ENCODE measurements at regions of chr11 and their contacts with region 1.

Region 1: GRCh38 chr11:18321980-18322711 is at the starts of genes GTF2H1 and HPS5:
- DNase-seq: peak; percentile 97
- H3K4me3 Mint-ChIP-seq: peak within 1 kb of the TSS; percentile 97
- H3K27ac Mint-ChIP-seq: peak within 1 kb of the TSS; percentile 100
- H3K4me1 Mint-ChIP-seq: peaks cover 66% of the 10 kb centered on the region
- H3K27me3 Mint-ChIP-seq: no peaks in the 10 kb centered on the region
- total RNA-seq, gene GTF2H1: 37.3 to 39.5 TPM
- total RNA-seq, gene HPS5: 19.9 to 20.9 TPM

Region 2: GRCh38 chr11:18105802-18106574 is 216.2 kb before region 1 on chr11 and contains the start of gene SAAL1:
- CTCF ChIA-PET with region 1: no interaction called
- POLR2A ChIA-PET with region 1: no interaction called
- intact Hi-C with region 1: loop called (anchors 2 kb)
- DNase-seq: peak; percentile 94
- H3K4me3 Mint-ChIP-seq: peak within 1 kb of the TSS; percentile 92
- H3K27ac Mint-ChIP-seq: peak within 1 kb of the TSS; percentile 78
- H3K4me1 Mint-ChIP-seq: peaks cover 37% of the 10 kb centered on the region
- H3K27me3 Mint-ChIP-seq: peaks cover 4% of the 10 kb centered on the region
- total RNA-seq, gene SAAL1: 32.1 to 34.3 TPM

Region 3: GRCh38 chr11:18332302-18332701 is 10.2 kb after region 1 on chr11:
- CTCF ChIA-PET with region 1: no interaction called
- POLR2A ChIA-PET with region 1: interaction called, 5 read pairs
- intact Hi-C with region 1: loop called (anchors 1 kb)
- DNase-seq: no peak
- H3K4me3 Mint-ChIP-seq: no peak overlapping the region
- H3K27ac Mint-ChIP-seq: peak overlapping the region; percentile 78
- H3K4me1 Mint-ChIP-seq: peaks cover 52% of the 10 kb centered on the region
- H3K27me3 Mint-ChIP-seq: no peaks in the 10 kb centered on the region

Region 4: DNA sequence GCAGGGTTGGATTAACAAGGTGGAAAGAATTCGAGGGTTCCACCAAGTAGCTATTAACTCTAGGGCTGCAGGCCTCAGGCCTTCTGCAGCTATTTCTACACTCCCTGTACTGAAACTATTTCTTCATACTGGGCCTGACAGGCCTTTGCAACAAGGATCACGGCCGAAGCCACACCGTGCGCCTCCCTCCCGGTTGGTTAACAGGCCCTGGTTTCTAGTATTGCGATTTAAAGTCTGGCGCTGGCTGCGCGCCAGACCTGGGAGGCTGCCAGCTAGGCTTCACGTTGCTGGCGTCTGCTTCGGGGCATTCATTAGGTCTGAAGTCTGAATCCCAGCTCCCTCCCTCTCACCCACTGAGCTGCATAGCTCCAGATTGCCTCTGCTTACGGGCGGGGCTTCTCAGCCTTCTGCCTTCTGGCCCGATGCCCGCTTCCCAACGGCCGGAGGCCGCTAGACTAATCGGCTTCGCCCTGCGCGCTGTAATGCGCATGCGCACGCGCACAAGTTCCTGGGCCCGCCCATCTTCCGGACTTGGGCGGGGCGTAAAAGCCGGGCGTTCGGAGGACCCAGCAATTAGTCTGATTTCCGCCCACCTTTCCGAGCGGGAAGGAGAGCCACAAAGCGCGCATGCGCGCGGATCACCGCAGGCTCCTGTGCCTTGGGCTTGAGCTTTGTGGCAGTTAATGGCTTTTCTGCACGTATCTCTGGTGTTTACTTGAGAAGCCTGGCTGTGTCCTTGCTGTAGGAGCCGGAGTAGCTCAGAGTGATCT is 73.8 kb after region 1 on chr11:
- CTCF ChIA-PET with region 1: interaction called, 21 read pairs
- POLR2A ChIA-PET with region 1: interaction called, 43 read pairs
- intact Hi-C with region 1: loop called (anchors 1 kb)
- DNase-seq: peak; percentile 98
- H3K4me3 Mint-ChIP-seq: peak overlapping the region; percentile 98
- H3K27ac Mint-ChIP-seq: peak overlapping the region; percentile 98
- H3K4me1 Mint-ChIP-seq: peaks cover 63% of the 10 kb centered on the region
- H3K27me3 Mint-ChIP-seq: no peaks in the 10 kb centered on the region

Region 5: DNA sequence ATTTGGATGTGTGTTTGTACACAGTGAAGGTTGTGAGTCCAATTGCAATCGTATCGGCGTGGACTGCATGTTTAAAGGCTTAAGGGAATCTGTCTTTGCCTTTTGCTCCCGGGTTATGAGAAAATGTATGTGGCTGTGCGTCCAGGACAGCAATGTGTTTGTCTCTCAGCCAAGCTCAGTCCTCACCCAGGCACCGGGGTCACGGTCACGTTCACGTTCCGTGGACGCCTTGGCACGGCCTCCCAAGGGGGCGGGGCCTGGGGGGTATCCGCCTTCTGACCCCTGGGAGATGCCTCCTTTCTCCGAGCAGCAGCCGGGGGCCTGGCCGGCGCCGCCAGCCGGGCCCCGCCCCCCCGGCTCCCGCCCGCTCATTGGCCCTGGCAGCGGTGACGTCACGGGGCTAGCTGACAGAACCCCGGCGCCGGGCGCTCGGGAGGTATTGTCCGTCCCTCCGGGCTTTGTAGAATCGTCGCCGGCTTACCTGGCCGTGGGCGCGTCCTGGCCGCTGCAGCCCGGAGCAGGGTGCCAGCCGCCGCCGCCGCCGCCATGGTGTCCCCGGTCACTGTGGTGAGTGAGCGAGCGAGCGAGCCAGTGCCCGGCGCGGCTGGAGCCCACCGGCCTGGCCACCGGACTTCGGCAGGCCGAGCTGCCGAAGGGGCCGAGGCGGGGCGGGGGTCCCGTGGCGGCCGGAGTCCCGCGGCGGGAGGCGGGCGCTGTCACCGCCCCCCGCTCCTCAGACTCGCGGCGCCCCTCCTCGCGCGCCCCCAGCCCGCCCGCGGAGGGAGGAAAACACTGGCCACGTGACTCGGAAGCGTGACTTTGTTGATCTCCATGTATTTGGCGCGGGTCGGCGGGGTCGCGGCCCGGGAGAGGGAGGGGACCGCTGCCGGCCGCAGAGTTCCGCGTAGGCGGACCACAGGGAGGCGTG is 376.5 kb after region 1 on chr11 and contains the start of gene TMEM86A:
- CTCF ChIA-PET with region 1: no interaction called
- POLR2A ChIA-PET with region 1: no interaction called
- intact Hi-C with region 1: loop called (anchors 1 kb)
- DNase-seq: peak; percentile 93
- H3K4me3 Mint-ChIP-seq: peak within 1 kb of the TSS; percentile 75
- H3K27ac Mint-ChIP-seq: peak within 1 kb of the TSS; percentile 18
- H3K4me1 Mint-ChIP-seq: peaks cover 14% of the 10 kb centered on the region
- H3K27me3 Mint-ChIP-seq: no peaks in the 10 kb centered on the region
- total RNA-seq, gene TMEM86A: 0.50 to 0.65 TPM

Measured in activated CD4-positive, alpha-beta memory T cell treated with anti-CD3 and anti-CD28 coated beads for 36 hours (primary cell).